IMR-90 (cell line): ENCODE measurements at regions of chr18 and their contacts with region 1.

Region 1: GRCh38 chr18:79378542-79379250 is 17.0 kb upstream of the NFATC1 start:
- DNase-seq: peak; percentile 74
- ATAC-seq: peak; percentile 93
- H3K4me3 ChIP-seq: no peak overlapping the region
- H3K27ac ChIP-seq: no peak overlapping the region
- H3K4me1 ChIP-seq: no peaks in the 10 kb centered on the region
- H3K27me3 ChIP-seq: no peaks in the 10 kb centered on the region
- CTCF ChIP-seq: peak; percentile 97
- POLR2A ChIP-seq: no peak; the same call in 1 of the 2 replicates
- RAD21 ChIP-seq: peak; percentile 93

Region 2: GRCh38 chr18:79458131-79458838 is 79.6 kb after region 1 on chr18:
- CTCF ChIA-PET with region 1: no interaction called
- POLR2A ChIA-PET with region 1: no interaction called
- dilution Hi-C with region 1: no loop called
- in situ Hi-C with region 1: no loop called
- intact Hi-C with region 1: no loop called
- DNase-seq: peak; percentile 84
- ATAC-seq: peak; percentile 97
- H3K4me3 ChIP-seq: no peak overlapping the region
- H3K27ac ChIP-seq: peak overlapping the region; percentile 14; the same call in 1 of the 2 replicates
- H3K4me1 ChIP-seq: peaks cover 16% of the 10 kb centered on the region
- H3K27me3 ChIP-seq: no peaks in the 10 kb centered on the region
- CTCF ChIP-seq: no peak
- POLR2A ChIP-seq: peak; percentile 38; the same call in 1 of the 2 replicates
- RAD21 ChIP-seq: no peak

Region 3: GRCh38 chr18:79644006-79644665 is 265.4 kb after region 1 on chr18:
- CTCF ChIA-PET with region 1: interaction called, 10 read pairs
- POLR2A ChIA-PET with region 1: no interaction called
- dilution Hi-C with region 1: no loop called
- in situ Hi-C with region 1: loop called (anchors 5 kb)
- intact Hi-C with region 1: loop called (anchors 1 kb)
- DNase-seq: peak; percentile 47
- ATAC-seq: peak; percentile 92
- H3K4me3 ChIP-seq: no peak overlapping the region
- H3K27ac ChIP-seq: no peak overlapping the region
- H3K4me1 ChIP-seq: no peaks in the 10 kb centered on the region
- H3K27me3 ChIP-seq: peaks cover 24% of the 10 kb centered on the region
- CTCF ChIP-seq: peak; percentile 85
- POLR2A ChIP-seq: no peak
- RAD21 ChIP-seq: peak; percentile 95